Activated CD4-positive, alpha-beta memory T cell treated with anti-CD3 and anti-CD28 coated beads, Interleukin-2, amount 10 ng/mL, durations not matched to agents 7 days and 5 days (primary cell): ENCODE measurements at regions of chr3 and their contacts with region 1.

Region 1: DNA sequence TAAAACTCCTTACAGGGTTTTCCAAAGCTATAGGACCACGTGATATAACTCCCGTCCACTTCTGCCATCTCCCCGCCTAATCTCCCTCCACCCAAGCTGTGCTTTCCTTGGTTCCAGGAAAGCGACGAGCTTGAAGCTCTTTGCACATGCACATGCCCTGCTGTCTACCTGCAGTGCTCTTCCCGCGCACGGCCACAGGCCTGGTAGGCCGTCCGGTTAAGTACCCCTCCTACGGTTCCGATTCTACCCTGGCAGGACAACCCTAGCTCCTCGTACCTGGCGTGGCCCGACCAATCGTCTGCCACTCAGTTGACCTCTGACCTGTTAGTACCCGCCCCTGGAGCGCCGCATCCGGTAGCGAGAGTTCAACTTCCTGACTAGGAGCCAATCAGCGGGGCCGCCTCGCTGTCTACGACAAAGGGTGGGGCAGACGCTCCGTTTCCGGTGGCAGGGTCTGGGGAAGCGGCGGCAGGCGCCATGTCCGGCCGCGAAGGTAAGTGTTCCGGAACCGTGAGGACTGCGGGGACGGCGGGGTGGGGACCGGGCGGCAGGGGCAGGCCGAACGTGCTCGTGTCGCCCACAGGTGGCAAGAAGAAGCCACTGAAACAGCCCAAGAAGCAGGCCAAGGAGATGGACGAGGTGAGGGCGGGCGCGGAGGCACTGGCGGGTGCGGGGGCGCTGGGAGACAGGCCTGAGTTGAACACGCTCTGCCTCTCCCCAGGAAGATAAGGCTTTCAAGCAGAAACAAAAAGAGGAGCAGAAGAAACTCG is at the starts of genes CCDC51 and TMA7:
- DNase-seq: peak; percentile 99
- H3K4me3 Mint-ChIP-seq: peak within 1 kb of the TSS; percentile 89
- H3K27ac Mint-ChIP-seq: peak within 1 kb of the TSS; percentile 93
- H3K4me1 Mint-ChIP-seq: peaks cover 43% of the 10 kb centered on the region
- H3K27me3 Mint-ChIP-seq: no peaks in the 10 kb centered on the region
- total RNA-seq, gene CCDC51: 14.9 to 17.5 TPM
- total RNA-seq, gene TMA7: 240 to 241 TPM

Region 2: DNA sequence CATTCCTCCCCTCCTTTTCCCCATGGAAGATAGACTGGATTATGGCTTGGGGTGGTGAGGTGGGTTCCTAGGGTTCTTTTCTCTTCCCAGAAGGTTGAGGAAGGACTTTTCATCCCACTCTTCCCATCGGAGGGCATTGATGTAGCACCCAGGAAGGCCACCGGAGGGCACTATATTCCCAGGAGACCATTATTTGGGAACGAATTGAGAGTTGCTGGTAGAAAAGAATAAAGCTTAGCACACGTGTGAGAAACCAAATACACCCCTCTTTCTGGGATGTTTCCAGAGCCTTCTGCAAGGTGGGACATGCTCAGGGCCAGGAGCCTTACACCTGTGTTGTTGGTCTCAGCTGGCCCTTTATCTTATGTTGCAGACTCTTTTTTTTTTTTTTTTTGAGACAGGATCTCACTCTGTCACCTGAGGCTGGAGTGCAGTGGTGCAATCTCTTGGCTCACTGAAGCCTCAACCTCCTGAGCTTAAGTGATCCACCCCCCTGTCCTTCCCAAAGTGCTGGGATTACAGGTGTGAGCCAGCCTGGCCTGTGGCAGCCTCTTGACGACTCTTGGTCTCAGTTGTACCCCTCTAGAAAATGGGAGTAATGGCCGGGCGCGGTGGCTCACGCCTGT is 245.4 kb before region 1 on chr3:
- CTCF ChIA-PET with region 1: interaction called, 31 read pairs
- POLR2A ChIA-PET with region 1: interaction called, 4 read pairs
- DNase-seq: peak; percentile 35
- H3K4me3 Mint-ChIP-seq: no peak overlapping the region
- H3K27ac Mint-ChIP-seq: no peak overlapping the region
- H3K4me1 Mint-ChIP-seq: peaks cover 1% of the 10 kb centered on the region
- H3K27me3 Mint-ChIP-seq: no peaks in the 10 kb centered on the region

Region 3: GRCh38 chr3:48268381-48269183 is 171.4 kb before region 1 on chr3:
- CTCF ChIA-PET with region 1: interaction called, 86 read pairs
- POLR2A ChIA-PET with region 1: interaction called, 5 read pairs
- DNase-seq: peak; percentile 85
- H3K4me3 Mint-ChIP-seq: peak overlapping the region; percentile 45
- H3K27ac Mint-ChIP-seq: peak overlapping the region; percentile 89
- H3K4me1 Mint-ChIP-seq: peaks cover 32% of the 10 kb centered on the region
- H3K27me3 Mint-ChIP-seq: no peaks in the 10 kb centered on the region

Region 4: DNA sequence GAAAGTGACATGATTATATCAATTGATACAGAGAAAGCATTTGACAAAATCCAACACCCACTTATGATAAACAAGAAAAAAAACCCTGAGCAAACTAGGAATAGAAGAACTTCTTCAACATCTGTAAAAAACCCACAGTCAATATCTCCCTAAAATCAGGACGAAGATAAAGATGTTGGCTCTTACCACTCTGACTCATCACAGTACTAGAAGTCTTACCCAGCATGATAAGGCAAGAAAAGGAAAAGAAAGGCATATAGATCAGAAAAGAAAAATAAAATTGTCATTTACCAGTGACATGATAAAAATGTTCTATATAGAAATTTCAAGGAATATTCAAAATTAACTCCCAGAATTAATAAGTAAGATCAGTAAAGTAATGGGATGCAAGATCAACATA is 75.2 kb before region 1 on chr3:
- CTCF ChIA-PET with region 1: no interaction called
- POLR2A ChIA-PET with region 1: no interaction called
- DNase-seq: no peak
- H3K4me3 Mint-ChIP-seq: no peak overlapping the region
- H3K27ac Mint-ChIP-seq: no peak overlapping the region
- H3K4me1 Mint-ChIP-seq: no peaks in the 10 kb centered on the region
- H3K27me3 Mint-ChIP-seq: peaks cover 19% of the 10 kb centered on the region

Region 5: DNA sequence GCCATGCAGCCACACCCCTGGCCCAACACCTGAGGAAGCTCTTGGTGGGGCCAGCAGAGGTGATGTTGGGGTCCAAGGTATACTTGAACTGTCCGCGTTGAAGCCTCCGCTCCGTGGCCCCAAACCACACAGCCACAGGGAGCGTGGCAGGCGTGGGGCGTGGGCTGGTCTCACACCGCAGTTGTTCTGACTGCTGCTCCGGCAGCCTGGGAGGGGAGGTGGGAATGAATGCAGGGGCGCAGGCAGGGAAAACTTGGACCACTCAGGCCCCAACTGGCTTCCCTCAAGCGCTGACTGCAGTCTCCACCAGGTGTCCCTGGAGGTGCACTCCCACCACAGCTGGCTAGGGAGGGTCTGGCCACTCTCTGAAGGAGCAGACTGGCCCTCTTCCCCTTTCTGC is 24.5 kb before region 1 on chr3:
- CTCF ChIA-PET with region 1: interaction called, 26 read pairs
- POLR2A ChIA-PET with region 1: no interaction called
- DNase-seq: no peak
- H3K4me3 Mint-ChIP-seq: no peak overlapping the region
- H3K27ac Mint-ChIP-seq: no peak overlapping the region
- H3K4me1 Mint-ChIP-seq: no peaks in the 10 kb centered on the region
- H3K27me3 Mint-ChIP-seq: no peaks in the 10 kb centered on the region

Region 6: DNA sequence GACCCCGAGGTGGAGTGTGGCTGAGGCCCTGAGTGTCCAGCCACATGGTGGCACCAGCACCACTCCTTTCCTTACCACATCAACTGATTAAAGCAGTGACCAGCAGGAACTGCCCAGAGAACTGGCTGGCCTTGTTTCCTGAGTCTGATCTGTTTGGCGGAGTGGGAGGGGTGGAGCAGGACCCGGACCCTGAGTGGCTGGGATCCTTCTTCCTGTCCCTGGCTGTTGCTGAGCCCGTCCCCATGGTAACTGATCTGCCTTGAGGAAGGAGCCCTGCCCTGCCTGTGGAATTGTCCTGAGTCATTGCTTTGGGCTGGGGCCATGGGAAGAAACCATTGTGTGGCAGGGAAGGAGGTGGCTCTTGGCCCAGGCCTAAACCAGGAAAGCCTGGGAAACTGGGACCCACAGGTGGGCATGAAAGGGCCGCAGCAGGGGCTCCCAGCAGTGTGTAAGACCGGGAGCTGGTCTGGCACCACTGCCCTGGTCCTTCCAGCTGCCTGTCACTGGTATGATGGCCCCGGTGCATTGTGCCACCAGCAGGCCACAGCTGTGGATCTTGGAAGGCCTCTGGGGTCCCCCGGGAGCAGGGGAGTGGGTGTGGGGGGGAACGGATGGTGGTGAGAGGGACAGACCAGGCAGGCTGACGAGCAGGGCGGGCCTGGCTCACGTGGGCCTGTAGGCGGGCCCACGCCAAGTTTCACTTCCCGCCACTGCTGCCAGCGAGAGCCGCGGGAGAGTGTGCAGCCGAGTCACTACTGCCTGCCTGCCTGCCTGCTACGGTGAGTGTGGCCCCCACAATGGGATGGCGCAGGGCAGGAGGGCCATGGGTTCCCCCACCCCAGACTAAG is 25.8 kb after region 1 on chr3:
- CTCF ChIA-PET with region 1: interaction called, 20 read pairs
- POLR2A ChIA-PET with region 1: interaction called, 69 read pairs
- DNase-seq: peak; percentile 87
- H3K4me3 Mint-ChIP-seq: peak overlapping the region; percentile 95
- H3K27ac Mint-ChIP-seq: peak overlapping the region; percentile 94
- H3K4me1 Mint-ChIP-seq: peaks cover 56% of the 10 kb centered on the region
- H3K27me3 Mint-ChIP-seq: no peaks in the 10 kb centered on the region

Region 7: DNA sequence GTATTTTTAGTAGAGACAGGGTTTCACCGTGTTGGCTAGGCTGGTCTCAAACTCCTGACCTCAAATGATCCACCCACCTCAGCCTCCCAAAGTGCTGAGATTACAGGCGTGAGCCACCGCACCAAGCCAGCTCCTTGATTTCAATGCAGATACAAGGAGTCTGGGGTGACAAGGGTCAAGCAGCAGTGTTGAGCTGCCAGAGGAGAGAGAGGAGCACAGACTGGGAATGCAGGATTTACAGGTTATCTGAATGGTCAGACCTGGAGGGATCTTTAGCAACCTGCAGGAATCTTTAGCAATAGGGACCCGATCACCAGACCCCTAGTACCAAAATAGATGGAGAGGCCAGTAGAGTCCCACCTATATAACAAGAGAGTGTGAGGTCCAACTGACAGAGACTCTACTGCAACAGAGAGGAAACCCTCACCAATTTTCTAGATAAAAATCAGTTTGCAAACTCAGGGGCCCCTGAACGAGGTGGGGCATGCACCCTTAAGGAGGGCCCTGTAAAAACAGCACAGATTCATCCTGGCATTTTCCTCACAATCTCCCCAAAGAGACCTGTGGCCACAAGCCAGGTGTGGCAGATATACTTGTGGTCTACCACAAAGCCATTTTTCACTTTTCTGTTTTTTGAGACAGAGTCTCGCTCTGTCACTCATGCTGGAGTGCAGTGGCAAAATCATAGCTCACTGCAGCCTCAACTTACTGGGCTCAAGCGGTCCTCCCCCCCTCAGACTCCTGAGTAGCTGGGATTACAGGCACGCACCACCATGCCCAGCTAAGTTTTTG is 74.6 kb after region 1 on chr3:
- CTCF ChIA-PET with region 1: interaction called, 24 read pairs
- POLR2A ChIA-PET with region 1: interaction called, 3 read pairs
- DNase-seq: peak; percentile 74
- H3K4me3 Mint-ChIP-seq: peak overlapping the region; percentile 32
- H3K27ac Mint-ChIP-seq: peak overlapping the region; percentile 72
- H3K4me1 Mint-ChIP-seq: peaks cover 69% of the 10 kb centered on the region
- H3K27me3 Mint-ChIP-seq: peaks cover 16% of the 10 kb centered on the region

Region 8: DNA sequence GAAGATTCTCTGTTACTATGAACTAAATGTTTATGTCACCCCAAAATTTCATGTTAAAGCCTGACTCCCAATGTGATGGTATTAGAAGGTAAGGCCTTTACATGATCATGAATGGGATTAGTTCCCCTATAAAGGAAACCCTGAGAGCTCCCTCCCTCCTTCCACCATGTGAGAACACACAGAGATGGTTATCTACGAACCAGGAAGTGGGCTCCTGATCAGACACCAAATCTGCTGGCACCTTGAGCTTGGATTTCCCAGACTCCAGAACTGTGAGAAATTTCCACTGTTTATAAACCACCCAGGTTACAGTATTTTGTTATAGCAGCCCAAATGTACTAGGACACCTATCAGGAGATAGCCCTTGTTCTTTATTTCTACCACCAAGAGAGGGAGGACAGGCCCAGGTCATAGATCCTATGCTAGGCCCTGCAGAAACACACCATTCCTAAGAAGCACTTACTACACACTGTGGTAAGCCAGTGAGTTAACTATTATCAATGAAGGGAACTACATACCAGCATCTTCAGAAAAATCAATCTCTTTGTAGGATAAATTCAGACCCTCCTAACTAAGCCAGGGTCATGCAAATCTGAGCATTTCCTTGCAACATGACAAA is 348.6 kb after region 1 on chr3:
- CTCF ChIA-PET with region 1: no interaction called
- POLR2A ChIA-PET with region 1: no interaction called
- DNase-seq: no peak
- H3K4me3 Mint-ChIP-seq: no peak overlapping the region
- H3K27ac Mint-ChIP-seq: no peak overlapping the region
- H3K4me1 Mint-ChIP-seq: peaks cover 11% of the 10 kb centered on the region
- H3K27me3 Mint-ChIP-seq: no peaks in the 10 kb centered on the region